Naive thymus-derived CD8-positive, alpha-beta T cell (primary cell): ENCODE measurements at regions of chr9 and their contacts with region 1.

Region 1: GRCh38 chr9:91174772-91175171 is 186.9 kb downstream of the AUH start:
- DNase-seq: peak in 4 of 10 donors; percentile 8 to 55 (median 38)
- ATAC-seq: peak; percentile 61 to 67
- H3K4me3 Mint-ChIP-seq: peak overlapping the region in 8 of 10 donors; percentile 16 to 62 (median 38)
- H3K27ac Mint-ChIP-seq: peak overlapping the region in 1 of 10 donors; percentile 14
- H3K4me1 Mint-ChIP-seq: peaks cover 16 to 35% (median 32%) of the 10 kb centered on the region in 4 donors
- H3K27me3 Mint-ChIP-seq: no peaks in the 10 kb centered on the region

Region 2: GRCh38 chr9:91193658-91194391 is 19.1 kb after region 1 on chr9:
- POLR2A ChIA-PET with region 1: interaction called, 13 read pairs
- DNase-seq: peak; percentile 27 to 79 (median 58)
- ATAC-seq: peak; percentile 90
- H3K4me3 Mint-ChIP-seq: peak overlapping the region; percentile 75 to 97 (median 89)
- H3K27ac Mint-ChIP-seq: peak overlapping the region; percentile 49 to 97 (median 93)
- H3K4me1 Mint-ChIP-seq: peaks cover 17 to 43% (median 31%) of the 10 kb centered on the region in 4 donors
- H3K27me3 Mint-ChIP-seq: no peaks in the 10 kb centered on the region